Psoas muscle (tissue), 8 donors: ENCODE measurements at regions of chr1 and their contacts with region 1.

Region 1: DNA sequence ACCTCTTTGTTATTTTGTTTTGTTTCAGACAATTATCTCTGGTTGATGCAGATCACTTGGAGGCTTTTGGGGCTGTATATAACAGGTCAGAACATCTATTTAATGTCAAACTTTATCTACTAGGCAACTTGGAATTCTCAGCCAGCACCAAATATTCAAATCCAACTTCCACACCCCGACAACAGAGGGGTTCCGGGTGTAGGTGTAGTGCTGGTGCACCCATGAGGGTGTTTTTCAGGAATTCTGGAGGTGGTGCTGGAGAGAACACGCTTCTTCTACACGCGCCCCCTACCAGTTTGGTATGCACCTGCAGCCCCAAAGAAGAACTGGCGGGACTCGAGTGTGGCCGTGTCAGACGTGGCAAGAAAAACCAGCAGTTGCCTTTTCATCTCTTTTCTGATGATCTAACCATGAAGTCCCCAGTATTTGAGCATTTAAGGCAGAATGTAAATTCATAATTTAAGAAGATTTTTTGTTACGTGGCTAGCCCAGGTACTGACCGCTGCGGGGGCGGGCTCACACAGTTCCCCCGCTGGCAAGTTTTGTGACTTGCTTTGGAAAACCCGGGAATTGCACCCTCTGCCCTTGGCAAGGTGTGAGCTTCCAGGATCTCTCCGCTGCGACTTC is 462 bp upstream of the TLCD4 start:
- DNase-seq: peak; percentile 29 to 61
- ATAC-seq: peak; percentile 58 to 75 (median 68)
- H3K4me3 ChIP-seq: peak overlapping the region; percentile 78
- H3K27ac ChIP-seq: peak overlapping the region; percentile 79
- H3K4me1 ChIP-seq: peaks cover 13% of the 10 kb centered on the region
- H3K27me3 ChIP-seq: no peaks in the 10 kb centered on the region
- CTCF ChIP-seq: peak; percentile 46

Region 2: DNA sequence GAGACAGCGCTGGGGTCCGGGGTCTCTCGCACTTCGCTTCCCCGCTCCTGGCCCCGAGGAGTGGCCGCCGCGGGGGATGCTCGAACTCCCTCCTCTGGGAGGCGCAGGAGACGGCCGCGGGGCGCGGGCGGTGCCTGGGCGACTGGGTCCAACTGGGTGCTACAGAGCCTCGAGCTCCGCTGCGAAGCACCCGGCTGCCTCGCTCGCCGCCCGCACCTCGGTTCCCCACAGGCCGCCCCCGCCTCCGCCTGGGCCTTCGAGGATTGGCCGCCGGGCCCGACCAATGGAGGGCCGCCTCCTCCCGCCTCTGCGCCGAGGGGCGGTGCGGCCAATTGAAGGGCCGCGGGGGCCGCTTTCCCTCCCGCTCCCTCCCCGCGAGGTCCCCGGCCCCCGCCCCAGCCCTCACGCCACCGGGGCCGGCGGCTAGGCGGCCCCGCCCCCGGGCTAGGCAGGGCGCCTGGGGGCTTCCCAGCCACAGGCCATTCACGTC is 189.7 kb before region 1 on chr1 and contains the start of gene CNN3:
- intact Hi-C with region 1: no loop called
- DNase-seq: peak; percentile 91 to 92
- ATAC-seq: peak; percentile 80 to 88 (median 88)
- H3K4me3 ChIP-seq: peak within 1 kb of the TSS; percentile 71
- H3K27ac ChIP-seq: peak within 1 kb of the TSS; percentile 80
- H3K4me1 ChIP-seq: peaks cover 5% of the 10 kb centered on the region
- H3K27me3 ChIP-seq: peaks cover 0 to 67% (median 21%) of the 10 kb centered on the region in 3 donors
- CTCF ChIP-seq: no peak
- total RNA-seq, gene CNN3: 14.7 to 46.2 (median 34.0) TPM

Region 3: GRCh38 chr1:95072532-95073419 is 43.9 kb before region 1 on chr1 and contains the start of gene ALG14:
- intact Hi-C with region 1: loop called in 1 of 2 experiments (anchors 5 kb)
- DNase-seq: peak; percentile 94 to 97
- ATAC-seq: peak; percentile 99
- H3K4me3 ChIP-seq: peak within 1 kb of the TSS; percentile 78
- H3K27ac ChIP-seq: peak within 1 kb of the TSS; percentile 96
- H3K4me1 ChIP-seq: peaks cover 12% of the 10 kb centered on the region
- H3K27me3 ChIP-seq: peaks cover 0 to 13% (median 4%) of the 10 kb centered on the region in 3 donors
- CTCF ChIP-seq: no peak
- total RNA-seq, gene ALG14: 1.8 to 2.7 (median 2.4) TPM

Region 4: DNA sequence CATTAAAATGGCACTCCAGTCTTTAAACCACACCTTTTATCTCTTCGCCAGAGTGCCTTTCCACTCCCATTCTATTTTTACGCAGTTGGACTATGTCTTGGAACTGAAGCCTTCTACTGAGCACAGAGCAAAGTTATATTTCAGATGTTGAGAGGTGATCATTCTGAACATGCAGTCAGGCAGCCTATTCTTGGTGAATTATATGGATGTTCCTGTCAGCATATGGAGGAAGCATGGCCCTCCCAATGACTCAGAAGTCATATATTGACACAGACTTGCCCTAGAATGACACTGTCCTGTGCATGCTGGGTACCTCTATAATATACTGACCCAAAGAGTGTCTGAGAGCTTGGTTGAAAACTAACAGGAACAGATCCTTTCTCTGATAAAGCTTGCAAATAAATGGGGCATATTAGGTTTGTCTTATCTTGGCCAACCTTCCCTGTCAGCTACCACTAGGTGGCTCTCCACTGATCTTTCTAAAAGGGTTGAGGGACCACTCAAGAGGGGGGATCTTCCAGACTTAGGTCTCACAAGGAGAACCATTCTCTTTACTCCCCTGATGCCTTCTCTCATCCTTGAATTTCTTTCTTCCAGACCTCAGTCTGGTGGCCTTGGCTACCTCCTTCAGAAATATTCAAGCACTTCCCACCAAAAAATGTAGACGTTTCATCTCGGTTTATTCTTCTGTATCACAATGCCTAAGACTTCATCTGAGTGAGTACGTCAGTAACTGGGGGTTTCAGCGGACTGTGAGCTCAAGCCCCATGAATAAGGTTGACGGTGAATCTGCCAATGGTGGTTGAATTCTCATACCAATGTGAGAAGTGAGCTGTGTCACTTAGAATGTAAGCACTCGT is 32.1 kb before region 1 on chr1:
- intact Hi-C with region 1: loop called in 1 of 2 experiments (anchors 5 kb)
- DNase-seq: no peak
- ATAC-seq: peak; percentile 52 to 74 (median 72)
- H3K4me3 ChIP-seq: no peak overlapping the region
- H3K27ac ChIP-seq: peak overlapping the region; percentile 7
- H3K4me1 ChIP-seq: peaks cover 13% of the 10 kb centered on the region
- H3K27me3 ChIP-seq: no peaks in the 10 kb centered on the region
- CTCF ChIP-seq: peak; percentile 66